ENCODE measurements at regions of chr10 and their contacts with region 1.

Region 1: GRCh38 chr10:24952707-24953645 is 570 bp upstream of the PRTFDC1 start:
- DNase-seq: peak; percentile 56
- ATAC-seq: peak; percentile 62
- H3K4me3 ChIP-seq: peak overlapping the region; percentile 41
- H3K27ac ChIP-seq: peak overlapping the region; percentile 84
- H3K4me1 ChIP-seq: peaks cover 26% of the 10 kb centered on the region
- H3K27me3 ChIP-seq: no peaks in the 10 kb centered on the region
- CTCF ChIP-seq: peak; percentile 38
- POLR2A ChIP-seq: no peak
- RAD21 ChIP-seq: 0 out of 2 replicates have a peak, but pooled peaks have one; percentile 24

Region 2: DNA sequence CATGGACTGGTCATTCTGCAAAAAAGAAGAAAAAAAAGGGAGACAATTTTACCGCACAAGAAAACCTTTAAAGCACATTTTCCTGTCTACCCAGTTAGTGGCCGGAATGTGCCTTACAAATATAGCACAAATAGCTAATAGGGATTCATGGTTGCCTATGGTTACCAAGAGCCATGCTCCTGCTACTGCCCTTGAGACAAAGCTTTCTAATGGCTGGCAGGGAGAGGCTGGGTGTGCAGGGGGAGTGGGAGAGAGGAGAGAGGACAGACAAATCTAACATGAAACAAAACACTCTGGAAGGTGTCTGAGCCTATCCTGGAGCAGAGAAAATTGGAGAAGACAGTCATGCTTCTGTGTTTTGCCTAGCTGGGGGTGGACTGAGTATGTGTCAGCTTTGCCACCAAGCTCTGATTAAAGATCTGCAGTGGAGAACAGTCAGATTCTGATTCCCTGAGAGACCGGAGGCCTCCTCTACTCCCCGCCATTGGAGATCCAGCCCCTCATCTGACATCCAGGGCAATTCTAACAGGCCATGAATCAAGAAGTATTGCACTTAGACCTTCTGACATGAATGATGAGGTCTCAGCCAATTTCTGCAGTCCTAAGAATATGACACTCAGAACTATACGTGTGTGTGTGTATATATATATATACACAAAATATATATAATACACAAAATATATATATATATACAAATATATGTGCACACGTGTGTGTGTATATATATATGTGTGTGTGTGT is 80.8 kb before region 1 on chr10:
- CTCF ChIA-PET with region 1: no interaction called
- POLR2A ChIA-PET with region 1: no interaction called
- dilution Hi-C with region 1: no loop called
- in situ Hi-C with region 1: no loop called
- intact Hi-C with region 1: loop called (anchors 1 kb)
- DNase-seq: no peak
- ATAC-seq: no peak
- H3K4me3 ChIP-seq: no peak overlapping the region
- H3K27ac ChIP-seq: no peak overlapping the region
- H3K4me1 ChIP-seq: peaks cover 9% of the 10 kb centered on the region
- H3K27me3 ChIP-seq: no peaks in the 10 kb centered on the region
- CTCF ChIP-seq: no peak
- POLR2A ChIP-seq: no peak
- RAD21 ChIP-seq: no peak

Region 3: GRCh38 chr10:24894309-24894708 is 58.7 kb before region 1 on chr10:
- CTCF ChIA-PET with region 1: no interaction called
- POLR2A ChIA-PET with region 1: interaction called, 9 read pairs
- dilution Hi-C with region 1: no loop called
- in situ Hi-C with region 1: no loop called
- intact Hi-C with region 1: loop called (anchors 5 kb)
- DNase-seq: peak; percentile 97
- ATAC-seq: peak; percentile 88
- H3K4me3 ChIP-seq: no peak overlapping the region
- H3K27ac ChIP-seq: peak overlapping the region; percentile 16; the same call in 1 of the 2 replicates
- H3K4me1 ChIP-seq: peaks cover 14% of the 10 kb centered on the region
- H3K27me3 ChIP-seq: no peaks in the 10 kb centered on the region
- CTCF ChIP-seq: no peak
- POLR2A ChIP-seq: no peak
- RAD21 ChIP-seq: no peak; the same call in 1 of the 2 replicates